ENCODE measurements at regions of chrX and their contacts with region 1.

Region 1: DNA sequence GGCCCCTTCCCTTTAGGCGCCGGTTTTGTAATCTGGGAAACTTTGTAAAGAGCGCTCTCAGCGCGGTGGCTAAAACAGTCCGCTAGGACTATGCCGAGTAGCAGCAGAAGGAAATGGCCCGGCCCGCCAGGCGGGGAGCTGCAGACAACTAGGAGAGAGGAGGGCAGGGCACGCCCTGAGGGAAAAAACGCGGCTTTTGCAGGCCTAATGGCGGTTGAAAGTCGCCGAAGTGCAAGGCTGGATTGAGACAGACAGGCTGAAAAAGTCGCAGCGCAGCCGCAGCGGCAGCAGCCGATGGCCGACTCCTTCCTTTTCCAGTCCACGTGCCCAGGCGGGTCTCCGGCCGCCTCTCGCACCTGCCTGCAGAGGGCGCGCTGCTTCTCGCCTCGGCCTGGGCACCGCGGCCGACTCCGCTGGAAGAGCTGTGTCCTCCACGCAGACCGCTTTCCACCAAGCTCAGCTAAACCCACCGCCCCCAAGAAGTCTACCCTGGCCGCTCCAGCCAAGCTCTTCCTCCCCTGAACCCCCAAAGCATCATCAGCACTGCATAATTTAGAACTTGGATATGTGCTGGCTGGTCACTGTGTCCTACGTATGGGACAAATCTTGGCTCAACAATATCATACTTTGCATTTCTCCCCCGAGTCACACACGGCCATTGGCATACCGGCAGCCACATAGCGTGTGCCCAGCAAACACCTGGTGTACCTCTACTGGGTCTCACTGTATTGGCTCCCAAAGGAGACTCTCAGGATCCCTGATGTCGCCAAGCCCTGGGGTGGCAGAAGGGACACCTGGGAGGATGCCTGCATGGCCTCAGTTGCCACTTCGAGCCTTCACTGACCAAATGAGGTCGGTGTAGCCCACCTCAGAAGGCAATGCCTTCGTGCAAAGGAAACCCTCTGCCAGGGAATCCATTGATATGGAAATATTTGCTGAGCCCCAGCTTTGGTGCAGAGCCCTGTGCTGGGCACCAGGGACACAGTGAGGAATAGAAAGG is 14.5 kb downstream of the SLC25A5 start:
- DNase-seq: peak in 1 of 2 experiments; percentile 78
- H3K4me3 ChIP-seq: peak overlapping the region; percentile 14 to 56 (median 26); a peak in 5 of 8 replicates
- H3K27ac ChIP-seq: no peak overlapping the region
- H3K4me1 ChIP-seq: no peaks in the 10 kb centered on the region; a peak in 1 of 7 replicates
- H3K27me3 ChIP-seq: peaks cover 0 to 10% (median 2%) of the 10 kb centered on the region in 4 experiments; a peak in 1 of 7 replicates
- CTCF ChIP-seq: peak; percentile 61 to 80 (median 74)
- EP300 ChIP-seq: no peak
- POLR2A ChIP-seq: peak in 1 of 2 experiments; percentile 43; a peak in 1 of 3 replicates
- RAD21 ChIP-seq: peak; percentile 30 to 44; a peak in 3 of 4 replicates

Region 2: GRCh38 chrX:119468930-119469635 is 13.7 kb before region 1 on chrX:
- CTCF ChIA-PET with region 1: interaction called, 28 read pairs
- POLR2A ChIA-PET with region 1: interaction called, 7 read pairs
- DNase-seq: peak; percentile 23 to 86
- H3K4me3 ChIP-seq: peak overlapping the region; percentile 79 to 99 (median 90)
- H3K27ac ChIP-seq: peak overlapping the region; percentile 70
- H3K4me1 ChIP-seq: peaks cover 0 to 12% (median 0%) of the 10 kb centered on the region in 4 experiments; a peak in 2 of 7 replicates
- H3K27me3 ChIP-seq: no peaks in the 10 kb centered on the region
- CTCF ChIP-seq: peak; percentile 64 to 76 (median 70)
- EP300 ChIP-seq: no peak
- POLR2A ChIP-seq: peak in 1 of 2 experiments; percentile 51; a peak in 1 of 3 replicates
- RAD21 ChIP-seq: peak; percentile 40 to 69